ENCODE measurements at regions of chr18 and their contacts with region 1.

Region 1: GRCh38 chr18:22728481-22729105 is 204.5 kb upstream of the RBBP8 start:
- DNase-seq: no peak
- H3K4me3 Mint-ChIP-seq: peak overlapping the region; percentile 11
- H3K27ac Mint-ChIP-seq: peak overlapping the region; percentile 49
- H3K4me1 Mint-ChIP-seq: peaks cover 21% of the 10 kb centered on the region
- H3K27me3 Mint-ChIP-seq: no peaks in the 10 kb centered on the region
- CTCF ChIP-seq: no peak

Region 2: GRCh38 chr18:22790545-22791309 is 62.1 kb after region 1 on chr18:
- CTCF ChIA-PET with region 1: no interaction called
- intact Hi-C with region 1: loop called (anchors 5 kb)
- DNase-seq: no peak
- H3K4me3 Mint-ChIP-seq: no peak overlapping the region
- H3K27ac Mint-ChIP-seq: no peak overlapping the region
- H3K4me1 Mint-ChIP-seq: peaks cover 12% of the 10 kb centered on the region
- H3K27me3 Mint-ChIP-seq: no peaks in the 10 kb centered on the region
- CTCF ChIP-seq: no peak

Measured in Calu3 (cell line).